MCF 10A (cell line): ENCODE measurements at regions of chr2 and their contacts with region 1.

Region 1: GRCh38 chr2:189096769-189097447 is 82.7 kb downstream of the COL5A2 start:
- DNase-seq: peak; percentile 42
- H3K4me3 Mint-ChIP-seq: no peak overlapping the region
- H3K27ac Mint-ChIP-seq: no peak overlapping the region
- H3K4me1 Mint-ChIP-seq: peaks cover 15% of the 10 kb centered on the region
- H3K27me3 Mint-ChIP-seq: no peaks in the 10 kb centered on the region
- CTCF ChIP-seq: no peak

Region 2: GRCh38 chr2:188524519-188525113 is 572.3 kb before region 1 on chr2:
- CTCF ChIA-PET with region 1: interaction called, 18 read pairs
- POLR2A ChIA-PET with region 1: no interaction called
- intact Hi-C with region 1: loop called (anchors 2 kb)
- DNase-seq: peak; percentile 67
- H3K4me3 Mint-ChIP-seq: no peak overlapping the region
- H3K27ac Mint-ChIP-seq: no peak overlapping the region
- H3K4me1 Mint-ChIP-seq: peaks cover 7% of the 10 kb centered on the region
- H3K27me3 Mint-ChIP-seq: no peaks in the 10 kb centered on the region
- CTCF ChIP-seq: peak; percentile 73

Region 3: GRCh38 chr2:189002079-189002478 is 94.8 kb before region 1 on chr2:
- CTCF ChIA-PET with region 1: no interaction called
- POLR2A ChIA-PET with region 1: no interaction called
- intact Hi-C with region 1: no loop called
- DNase-seq: peak; percentile 29
- H3K4me3 Mint-ChIP-seq: no peak overlapping the region
- H3K27ac Mint-ChIP-seq: no peak overlapping the region
- H3K4me1 Mint-ChIP-seq: no peaks in the 10 kb centered on the region
- H3K27me3 Mint-ChIP-seq: no peaks in the 10 kb centered on the region
- CTCF ChIP-seq: no peak

Region 4: GRCh38 chr2:189115126-189115525 is 18.2 kb after region 1 on chr2:
- CTCF ChIA-PET with region 1: interaction called, 11 read pairs
- POLR2A ChIA-PET with region 1: no interaction called
- intact Hi-C with region 1: no loop called
- DNase-seq: peak; percentile 29
- H3K4me3 Mint-ChIP-seq: no peak overlapping the region
- H3K27ac Mint-ChIP-seq: no peak overlapping the region
- H3K4me1 Mint-ChIP-seq: no peaks in the 10 kb centered on the region
- H3K27me3 Mint-ChIP-seq: no peaks in the 10 kb centered on the region
- CTCF ChIP-seq: peak; percentile 50

Region 5: GRCh38 chr2:189287982-189288521 is 191.1 kb after region 1 on chr2:
- CTCF ChIA-PET with region 1: interaction called, 12 read pairs
- POLR2A ChIA-PET with region 1: interaction called, 7 read pairs
- intact Hi-C with region 1: loop called (anchors 1 kb)
- DNase-seq: peak; percentile 72
- H3K4me3 Mint-ChIP-seq: no peak overlapping the region
- H3K27ac Mint-ChIP-seq: peak overlapping the region; percentile 80
- H3K4me1 Mint-ChIP-seq: peaks cover 29% of the 10 kb centered on the region
- H3K27me3 Mint-ChIP-seq: no peaks in the 10 kb centered on the region
- CTCF ChIP-seq: peak; percentile 60

Region 6: DNA sequence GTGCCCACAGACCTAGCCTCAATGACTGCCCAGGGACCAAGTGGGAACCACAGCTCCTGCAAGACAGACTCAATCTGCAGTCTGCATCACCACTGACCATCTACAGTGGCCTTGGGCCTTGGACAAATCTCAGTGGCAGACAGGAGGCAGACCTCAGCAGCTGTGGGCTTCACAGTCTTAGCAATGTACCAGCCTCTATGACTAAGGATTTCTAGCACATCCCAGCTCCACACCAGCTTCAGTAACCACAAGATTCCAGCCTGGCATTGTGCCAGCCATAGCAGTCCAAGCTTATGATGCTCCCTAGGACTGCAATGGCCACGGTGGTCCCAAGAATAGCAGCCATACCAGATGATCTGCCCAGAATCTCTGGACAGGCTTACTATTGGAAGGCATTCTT is 324.7 kb after region 1 on chr2:
- CTCF ChIA-PET with region 1: interaction called, 17 read pairs
- POLR2A ChIA-PET with region 1: no interaction called
- intact Hi-C with region 1: no loop called
- DNase-seq: peak; percentile 69
- H3K4me3 Mint-ChIP-seq: no peak overlapping the region
- H3K27ac Mint-ChIP-seq: no peak overlapping the region
- H3K4me1 Mint-ChIP-seq: no peaks in the 10 kb centered on the region
- H3K27me3 Mint-ChIP-seq: no peaks in the 10 kb centered on the region
- CTCF ChIP-seq: no peak